Endothelial cell of umbilical vein (primary cell): ENCODE measurements at regions of chr5 and their contacts with region 1.

Region 1: DNA sequence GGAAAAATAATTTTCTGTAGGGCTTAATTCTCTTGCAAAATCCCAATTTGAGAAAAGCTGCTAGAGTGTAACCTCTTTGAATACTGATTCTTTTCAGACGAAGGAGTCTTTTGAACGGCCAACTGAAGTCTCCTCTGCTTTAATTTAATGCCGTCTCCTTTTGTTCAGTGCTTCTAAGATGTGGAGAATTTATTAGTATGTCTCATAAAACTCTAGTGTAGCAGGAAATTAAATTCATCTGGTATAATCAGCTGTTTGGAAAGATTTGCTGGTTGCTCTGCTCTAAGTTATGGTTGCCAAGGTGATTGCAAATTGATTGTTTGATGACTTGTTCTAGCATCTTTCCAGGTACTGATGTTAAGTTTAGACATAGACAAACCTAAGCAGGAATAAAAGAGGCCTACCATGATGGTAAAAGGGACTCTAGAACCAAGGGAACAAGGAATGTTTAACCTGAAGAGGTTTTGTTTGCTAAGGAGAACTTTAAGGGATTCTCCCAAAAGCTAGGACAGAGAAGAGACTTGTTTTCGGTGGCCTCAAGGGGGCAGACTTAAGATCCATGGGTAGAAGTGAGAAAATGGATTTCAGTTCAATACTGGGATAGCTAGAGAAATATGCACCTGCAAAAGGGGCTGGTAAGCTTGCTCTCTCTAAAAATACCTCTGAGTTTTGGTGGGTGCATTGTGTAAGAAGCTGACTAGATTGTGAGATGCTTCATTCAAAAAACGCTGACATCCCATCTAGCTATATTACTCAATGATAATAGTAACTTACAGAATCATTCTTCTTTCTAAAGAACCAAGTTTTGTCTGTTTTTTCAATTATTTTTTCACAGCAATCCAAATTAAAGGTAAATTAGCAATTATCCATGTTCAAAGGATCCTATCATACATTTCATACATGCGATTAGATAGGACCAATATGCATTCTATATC is 5.7 kb upstream of the ADRB2 start:
- DNase-seq: peak; percentile 45
- H3K4me3 ChIP-seq: no peak overlapping the region
- H3K27ac ChIP-seq: no peak overlapping the region
- H3K4me1 ChIP-seq: peaks cover 6% of the 10 kb centered on the region
- H3K27me3 ChIP-seq: no peaks in the 10 kb centered on the region
- CTCF ChIP-seq: peak; percentile 57 to 68
- POLR2A ChIP-seq: no peak

Region 2: GRCh38 chr5:148805326-148806290 is 15.1 kb before region 1 on chr5:
- CTCF ChIA-PET with region 1: interaction called, 38 read pairs
- POLR2A ChIA-PET with region 1: no interaction called
- dilution Hi-C with region 1: no loop called
- intact Hi-C with region 1: no loop called
- DNase-seq: peak; percentile 77
- H3K4me3 ChIP-seq: no peak overlapping the region
- H3K27ac ChIP-seq: peak overlapping the region; percentile 10
- H3K4me1 ChIP-seq: peaks cover 35% of the 10 kb centered on the region
- H3K27me3 ChIP-seq: no peaks in the 10 kb centered on the region
- CTCF ChIP-seq: no peak
- POLR2A ChIP-seq: no peak

Region 3: GRCh38 chr5:148831590-148832565 is 11.2 kb after region 1 on chr5:
- CTCF ChIA-PET with region 1: interaction called, 15 read pairs
- POLR2A ChIA-PET with region 1: no interaction called
- dilution Hi-C with region 1: no loop called
- intact Hi-C with region 1: no loop called
- DNase-seq: no peak
- H3K4me3 ChIP-seq: no peak overlapping the region
- H3K27ac ChIP-seq: no peak overlapping the region
- H3K4me1 ChIP-seq: peaks cover 22% of the 10 kb centered on the region
- H3K27me3 ChIP-seq: no peaks in the 10 kb centered on the region
- CTCF ChIP-seq: no peak
- POLR2A ChIP-seq: no peak

Region 4: GRCh38 chr5:148853868-148854267 is 33.1 kb after region 1 on chr5:
- CTCF ChIA-PET with region 1: no interaction called
- POLR2A ChIA-PET with region 1: no interaction called
- dilution Hi-C with region 1: no loop called
- intact Hi-C with region 1: no loop called
- DNase-seq: no peak
- H3K4me3 ChIP-seq: no peak overlapping the region
- H3K27ac ChIP-seq: no peak overlapping the region
- H3K4me1 ChIP-seq: no peaks in the 10 kb centered on the region
- H3K27me3 ChIP-seq: no peaks in the 10 kb centered on the region
- CTCF ChIP-seq: no peak
- POLR2A ChIP-seq: no peak